Activated CD4-positive, alpha-beta T cell treated with anti-CD3 and anti-CD28 coated beads, Interleukin-2, amount 10 ng/mL, durations not matched to agents 24 days and 14 days (primary cell): ENCODE measurements at regions of chr20 and their contacts with region 1.

Region 1: DNA sequence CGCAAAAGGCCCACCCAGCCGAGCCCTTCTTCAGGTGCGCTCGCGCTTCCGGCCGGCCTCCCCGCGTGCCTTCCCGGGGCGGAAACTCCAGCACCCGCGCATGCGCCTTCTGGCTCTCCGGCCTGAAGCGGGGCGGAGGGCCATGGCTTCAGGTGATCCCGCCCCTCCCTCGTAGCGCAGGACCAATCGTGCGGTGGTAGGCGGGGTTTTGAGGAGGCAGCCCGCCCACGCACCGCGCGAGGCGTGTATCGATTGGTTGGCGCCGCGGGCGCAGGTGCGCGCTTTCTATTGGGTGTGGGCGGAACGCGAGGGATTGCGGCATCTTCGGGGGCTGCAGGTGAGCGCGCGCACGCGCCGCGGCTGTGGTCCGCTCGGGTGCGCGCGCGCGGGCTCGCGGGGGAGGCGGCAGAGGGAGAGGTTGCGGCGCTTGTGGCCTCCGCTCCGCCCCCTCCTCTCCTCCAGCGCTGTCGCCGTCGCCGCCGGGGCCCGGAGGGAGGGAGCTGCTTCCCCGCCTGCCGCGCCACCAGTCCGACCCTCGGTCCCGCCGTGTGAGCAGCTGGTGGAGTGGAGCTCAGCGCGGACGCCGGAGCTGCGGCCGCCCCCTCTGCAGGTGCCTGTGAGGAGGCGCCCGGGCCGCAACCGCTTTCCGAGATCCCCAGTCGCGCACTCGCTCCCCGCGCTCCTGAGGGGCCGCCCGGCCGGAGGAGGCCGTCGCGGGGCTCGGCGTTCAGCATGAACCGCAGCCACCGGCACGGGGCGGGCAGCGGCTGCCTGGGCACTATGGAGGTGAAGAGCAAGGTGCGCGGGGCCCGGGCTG is at the start of gene PARD6B:
- DNase-seq: peak; percentile 100
- H3K4me3 Mint-ChIP-seq: peak within 1 kb of the TSS; percentile 86
- H3K27ac Mint-ChIP-seq: peak within 1 kb of the TSS; percentile 91
- H3K4me1 Mint-ChIP-seq: peaks cover 30% of the 10 kb centered on the region
- H3K27me3 Mint-ChIP-seq: no peaks in the 10 kb centered on the region
- total RNA-seq, gene PARD6B: 6.0 and 7.0 TPM in 2 replicates

Region 2: GRCh38 chr20:50115591-50116372 is 615.5 kb before region 1 on chr20:
- intact Hi-C with region 1: loop called (anchors 2 kb)
- DNase-seq: peak; percentile 97
- H3K4me3 Mint-ChIP-seq: peak overlapping the region; percentile 98
- H3K27ac Mint-ChIP-seq: peak overlapping the region; percentile 85
- H3K4me1 Mint-ChIP-seq: peaks cover 47% of the 10 kb centered on the region
- H3K27me3 Mint-ChIP-seq: no peaks in the 10 kb centered on the region

Region 3: DNA sequence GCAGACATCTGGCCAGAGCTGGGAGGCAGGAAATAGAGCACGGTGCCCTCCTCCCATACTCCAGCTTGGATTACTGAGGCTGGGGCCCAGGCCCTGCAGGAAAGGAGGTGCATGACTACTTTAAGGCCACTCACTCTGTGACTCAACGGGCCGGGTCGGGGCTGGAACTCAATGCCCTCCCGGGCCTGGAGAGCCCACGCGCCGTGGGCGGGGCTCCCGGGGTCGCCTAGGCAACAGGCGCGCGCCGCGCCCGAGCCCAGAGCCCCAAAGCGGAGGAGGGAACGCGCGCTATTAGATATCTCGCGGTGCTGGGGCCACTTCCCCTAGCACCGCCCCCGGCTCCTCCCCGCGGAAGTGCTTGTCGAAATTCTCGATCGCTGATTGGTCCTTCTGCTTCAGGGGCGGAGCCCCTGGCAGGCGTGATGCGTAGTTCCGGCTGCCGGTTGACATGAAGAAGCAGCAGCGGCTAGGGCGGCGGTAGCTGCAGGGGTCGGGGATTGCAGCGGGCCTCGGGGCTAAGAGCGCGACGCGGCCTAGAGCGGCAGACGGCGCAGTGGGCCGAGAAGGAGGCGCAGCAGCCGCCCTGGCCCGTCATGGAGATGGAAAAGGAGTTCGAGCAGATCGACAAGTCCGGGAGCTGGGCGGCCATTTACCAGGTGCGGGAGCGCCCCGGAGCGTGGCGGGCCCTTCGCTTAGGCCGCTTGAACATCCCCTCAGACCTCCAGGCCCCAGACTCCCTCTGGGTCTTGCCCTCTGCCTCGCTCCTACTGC is 221.1 kb before region 1 on chr20 and contains the start of gene PTPN1:
- intact Hi-C with region 1: loop called (anchors 10 kb)
- DNase-seq: peak; percentile 100
- H3K4me3 Mint-ChIP-seq: peak within 1 kb of the TSS; percentile 98
- H3K27ac Mint-ChIP-seq: peak within 1 kb of the TSS; percentile 93
- H3K4me1 Mint-ChIP-seq: peaks cover 44% of the 10 kb centered on the region
- H3K27me3 Mint-ChIP-seq: no peaks in the 10 kb centered on the region
- total RNA-seq, gene PTPN1: 61.4 and 62.9 TPM in 2 replicates

Region 4: DNA sequence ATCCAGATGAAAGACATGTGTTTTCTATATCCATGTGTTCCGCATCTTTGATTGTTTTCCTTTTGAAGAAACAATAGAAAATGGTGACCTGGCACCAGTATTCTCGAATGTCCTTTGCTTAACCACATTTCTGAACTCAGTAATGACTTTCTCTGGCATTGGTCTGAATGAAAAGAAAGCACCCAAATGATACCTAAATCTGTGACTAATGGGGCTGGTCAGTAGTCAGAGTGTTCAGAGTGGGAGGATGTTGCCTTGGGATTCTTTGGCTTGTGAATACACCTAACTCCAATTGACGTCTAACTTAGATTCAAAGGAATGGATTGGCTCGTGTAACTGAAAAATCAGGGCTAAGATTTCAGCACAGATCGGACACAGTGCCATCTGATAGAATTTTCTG is 27.2 kb after region 1 on chr20:
- intact Hi-C with region 1: no loop called
- DNase-seq: no peak
- H3K4me3 Mint-ChIP-seq: no peak overlapping the region
- H3K27ac Mint-ChIP-seq: no peak overlapping the region
- H3K4me1 Mint-ChIP-seq: no peaks in the 10 kb centered on the region
- H3K27me3 Mint-ChIP-seq: peaks cover 3% of the 10 kb centered on the region

Region 5: GRCh38 chr20:50790651-50791277 is 59.5 kb after region 1 on chr20:
- intact Hi-C with region 1: loop called (anchors 5 kb)
- DNase-seq: peak; percentile 93
- H3K4me3 Mint-ChIP-seq: no peak overlapping the region
- H3K27ac Mint-ChIP-seq: peak overlapping the region; percentile 69
- H3K4me1 Mint-ChIP-seq: peaks cover 11% of the 10 kb centered on the region
- H3K27me3 Mint-ChIP-seq: peaks cover 4% of the 10 kb centered on the region

Region 6: DNA sequence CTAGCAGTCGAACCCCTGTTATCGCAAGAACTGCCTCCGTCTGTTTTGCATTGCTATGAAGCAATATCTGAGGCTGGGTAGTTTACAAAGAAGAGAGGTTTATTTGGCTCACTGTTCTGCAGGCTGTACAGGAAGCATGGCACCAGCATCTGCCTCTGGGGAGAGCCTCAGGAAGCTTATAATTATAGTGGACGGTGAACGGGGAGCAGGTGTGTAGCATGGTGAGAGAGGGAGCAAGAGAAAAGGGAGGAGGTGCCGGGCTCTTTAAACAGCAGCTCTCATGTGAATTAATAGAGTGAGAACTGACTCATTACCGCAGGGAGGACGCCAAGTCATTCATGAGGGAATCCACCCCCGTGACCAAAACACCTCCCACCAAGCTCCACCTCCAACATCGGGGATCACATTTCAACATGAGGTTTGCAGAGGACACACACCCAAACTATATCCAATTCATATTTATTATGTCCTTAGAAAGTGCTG is 464.2 kb after region 1 on chr20:
- intact Hi-C with region 1: no loop called
- DNase-seq: no peak
- H3K4me3 Mint-ChIP-seq: no peak overlapping the region
- H3K27ac Mint-ChIP-seq: no peak overlapping the region
- H3K4me1 Mint-ChIP-seq: no peaks in the 10 kb centered on the region
- H3K27me3 Mint-ChIP-seq: peaks cover 3% of the 10 kb centered on the region